K562 (cell line): ENCODE measurements at regions of chr4 and their contacts with region 1.

Region 1: GRCh38 chr4:8241895-8242696 is 27.5 kb upstream of the HTRA3 start:
- DNase-seq: peak; percentile 80 to 95 (median 93)
- ATAC-seq: peak; percentile 97
- H3K4me3 ChIP-seq: no peak overlapping the region
- H3K27ac ChIP-seq: no peak overlapping the region; the same call in 2 of the 3 replicates
- H3K4me1 ChIP-seq: peaks cover 6 to 23% of the 10 kb centered on the region in 2 experiments; a peak in 3 of 5 replicates
- H3K27me3 ChIP-seq: peaks cover 0 to 40% of the 10 kb centered on the region in 2 experiments; a peak in 2 of 5 replicates
- CTCF ChIP-seq: peak; percentile 87 to 92 (median 91)
- EP300 ChIP-seq: no peak
- POLR2A ChIP-seq: no peak
- RAD21 ChIP-seq: peak; percentile 94 to 95

Region 2: DNA sequence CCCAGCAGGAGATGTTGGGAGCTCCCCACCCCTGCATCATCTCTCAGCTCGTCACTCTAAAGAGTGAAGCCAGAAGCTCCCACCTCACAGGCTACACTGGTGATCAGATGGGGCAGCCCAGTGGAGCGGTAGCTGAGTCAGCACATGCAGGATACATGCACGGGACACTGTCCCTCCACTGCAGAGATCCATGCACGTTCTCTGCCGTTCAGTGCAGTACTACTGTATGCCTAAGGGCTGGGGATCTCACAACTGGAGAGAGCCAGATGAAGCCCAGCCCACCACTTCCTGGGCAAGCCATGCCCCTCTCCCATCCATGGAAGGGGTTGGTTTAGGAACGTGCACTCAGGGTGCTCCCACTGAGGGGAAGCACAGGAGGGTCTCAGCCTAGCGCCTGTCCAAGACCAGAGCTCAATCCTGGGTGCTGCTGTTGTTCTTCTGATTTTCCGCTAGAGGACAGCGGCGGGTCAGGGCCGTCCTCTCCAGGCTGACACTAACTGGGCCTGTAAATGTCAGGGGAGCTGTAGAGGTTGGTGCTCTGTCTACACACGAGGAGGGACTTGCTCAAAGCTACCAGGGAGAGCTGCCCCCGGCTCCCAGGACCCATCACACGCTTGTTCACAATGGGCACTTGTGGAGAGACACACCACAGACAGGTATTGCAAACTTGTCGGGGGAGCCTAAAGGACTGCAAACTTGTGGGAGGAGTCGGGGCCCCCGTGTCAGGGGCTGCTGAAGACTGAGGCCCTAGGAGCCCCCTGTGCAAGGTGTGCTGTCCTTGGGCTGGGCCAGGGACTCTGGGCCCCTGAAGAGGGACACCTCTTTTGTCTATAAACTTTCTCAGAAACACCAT is 65.3 kb before region 1 on chr4:
- CTCF ChIA-PET with region 1: no interaction called
- POLR2A ChIA-PET with region 1: no interaction called
- in situ Hi-C with region 1: no loop called
- intact Hi-C with region 1: loop called (anchors 5 kb)
- DNase-seq: peak; percentile 49 to 60 (median 52)
- ATAC-seq: peak; percentile 96
- H3K4me3 ChIP-seq: no peak overlapping the region
- H3K27ac ChIP-seq: no peak overlapping the region
- H3K4me1 ChIP-seq: peaks cover 0 to 5% of the 10 kb centered on the region in 2 experiments; a peak in 2 of 5 replicates
- H3K27me3 ChIP-seq: peaks cover 4 to 29% of the 10 kb centered on the region in 2 experiments; a peak in 3 of 5 replicates
- CTCF ChIP-seq: peak; percentile 79 to 87 (median 84)
- EP300 ChIP-seq: no peak
- POLR2A ChIP-seq: no peak
- RAD21 ChIP-seq: peak; percentile 86 to 93

Region 3: GRCh38 chr4:8303485-8304301 is 61.6 kb after region 1 on chr4:
- CTCF ChIA-PET with region 1: no interaction called
- POLR2A ChIA-PET with region 1: no interaction called
- in situ Hi-C with region 1: no loop called
- intact Hi-C with region 1: loop called (anchors 10 kb)
- DNase-seq: peak; percentile 65 to 88 (median 72)
- ATAC-seq: peak; percentile 83
- H3K4me3 ChIP-seq: no peak overlapping the region
- H3K27ac ChIP-seq: peak overlapping the region; percentile 89
- H3K4me1 ChIP-seq: peaks cover 22 to 55% of the 10 kb centered on the region in 2 experiments; a peak in 4 of 5 replicates
- H3K27me3 ChIP-seq: no peaks in the 10 kb centered on the region
- CTCF ChIP-seq: no peak
- EP300 ChIP-seq: peak; percentile 99
- POLR2A ChIP-seq: no peak
- RAD21 ChIP-seq: 0 out of 4 replicates have a peak, but pooled peaks of 1 of the 2 experiments have one; percentile 16

Region 4: DNA sequence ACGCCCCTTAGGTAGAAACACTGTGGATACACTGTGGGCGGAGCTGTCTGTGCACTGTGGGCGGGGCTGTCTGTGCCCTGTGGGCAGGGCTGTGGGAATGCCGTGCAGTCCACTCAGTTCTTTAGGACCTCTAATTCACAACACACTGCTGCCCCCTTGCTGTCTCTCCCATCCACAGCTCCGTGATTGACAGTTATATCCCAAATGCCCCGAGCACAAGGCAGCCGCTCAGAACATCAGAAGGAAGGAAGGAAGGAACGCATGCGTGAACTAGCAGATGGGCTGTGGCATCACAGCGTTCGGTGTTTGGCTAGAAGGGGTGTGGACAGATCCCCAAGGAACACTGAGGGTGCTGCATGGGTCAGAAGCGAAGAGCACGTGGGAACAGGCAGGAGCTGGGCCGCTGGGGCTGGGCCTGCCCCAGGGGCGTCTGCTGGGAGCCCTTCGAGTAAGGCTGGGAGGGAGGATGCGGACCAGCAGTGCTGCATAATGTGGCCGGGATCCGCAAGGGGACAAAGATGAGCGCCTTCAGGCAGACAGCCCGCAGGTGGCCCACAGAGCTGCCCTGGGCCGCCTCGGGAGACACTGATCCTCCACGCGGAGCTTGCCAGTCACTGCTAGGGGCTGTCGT is 168.7 kb after region 1 on chr4:
- CTCF ChIA-PET with region 1: interaction called, 12 read pairs
- POLR2A ChIA-PET with region 1: interaction called, 5 read pairs
- in situ Hi-C with region 1: no loop called
- intact Hi-C with region 1: no loop called
- DNase-seq: peak; percentile 79 to 86 (median 85)
- ATAC-seq: peak; percentile 91
- H3K4me3 ChIP-seq: no peak overlapping the region
- H3K27ac ChIP-seq: no peak overlapping the region
- H3K4me1 ChIP-seq: peaks cover 16 to 26% of the 10 kb centered on the region in 2 experiments; a peak in 4 of 5 replicates
- H3K27me3 ChIP-seq: no peaks in the 10 kb centered on the region
- CTCF ChIP-seq: peak; percentile 40 to 78 (median 75)
- EP300 ChIP-seq: no peak
- POLR2A ChIP-seq: no peak
- RAD21 ChIP-seq: peak; percentile 56 to 67

Region 5: GRCh38 chr4:8594097-8595038 is 352.3 kb after region 1 on chr4:
- CTCF ChIA-PET with region 1: interaction called, 4 read pairs
- POLR2A ChIA-PET with region 1: interaction called, 5 read pairs
- in situ Hi-C with region 1: no loop called
- intact Hi-C with region 1: loop called (anchors 1 kb)
- DNase-seq: peak; percentile 84 to 94 (median 92)
- ATAC-seq: peak; percentile 87
- H3K4me3 ChIP-seq: no peak overlapping the region
- H3K27ac ChIP-seq: no peak overlapping the region
- H3K4me1 ChIP-seq: peaks cover 13 to 38% of the 10 kb centered on the region in 2 experiments; a peak in 4 of 5 replicates
- H3K27me3 ChIP-seq: peaks cover 7 to 21% of the 10 kb centered on the region in 2 experiments; a peak in 3 of 5 replicates
- CTCF ChIP-seq: peak; percentile 78 to 94 (median 81)
- EP300 ChIP-seq: no peak
- POLR2A ChIP-seq: no peak
- RAD21 ChIP-seq: peak; percentile 91 to 95